Activated B cell treated with CpG ODN at 0.5 μM for 24 hours (primary cell): ENCODE measurements at regions of chr3 and their contacts with region 1.

Region 1: GRCh38 chr3:16842272-16843270 is 42.2 kb upstream of the PLCL2 start:
- DNase-seq: peak; percentile 66
- ATAC-seq: peak; percentile 92
- H3K4me3 Mint-ChIP-seq: peak overlapping the region; percentile 75
- H3K27ac Mint-ChIP-seq: peak overlapping the region; percentile 98
- H3K4me1 Mint-ChIP-seq: peaks cover 67% of the 10 kb centered on the region
- H3K27me3 Mint-ChIP-seq: no peaks in the 10 kb centered on the region
- CTCF ChIP-seq: no peak

Region 2: DNA sequence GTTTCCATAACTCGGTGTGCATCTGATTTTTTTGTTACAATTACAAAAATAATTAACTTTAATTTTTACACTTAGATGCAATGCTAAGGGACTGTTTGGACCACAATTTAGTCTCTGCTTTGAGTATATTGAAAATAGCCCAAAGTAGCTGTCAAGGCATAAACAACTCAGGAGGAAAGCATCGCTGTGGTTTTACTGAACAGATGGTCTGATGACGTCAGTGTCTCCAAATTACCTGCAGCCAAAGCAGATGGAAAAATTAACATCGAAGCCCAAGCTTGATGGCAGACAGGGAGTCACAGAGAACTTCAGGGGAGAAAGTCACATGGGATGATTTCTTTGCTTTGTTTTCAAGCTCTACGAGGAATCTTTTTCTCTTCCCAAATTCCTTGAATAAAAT is 40.9 kb before region 1 on chr3:
- CTCF ChIA-PET with region 1: no interaction called
- POLR2A ChIA-PET with region 1: interaction called, 3 read pairs
- intact Hi-C with region 1: loop called (anchors 1 kb)
- DNase-seq: no peak
- ATAC-seq: no peak
- H3K4me3 Mint-ChIP-seq: peak overlapping the region; percentile 16
- H3K27ac Mint-ChIP-seq: peak overlapping the region; percentile 69
- H3K4me1 Mint-ChIP-seq: peaks cover 44% of the 10 kb centered on the region
- H3K27me3 Mint-ChIP-seq: no peaks in the 10 kb centered on the region
- CTCF ChIP-seq: no peak

Region 3: DNA sequence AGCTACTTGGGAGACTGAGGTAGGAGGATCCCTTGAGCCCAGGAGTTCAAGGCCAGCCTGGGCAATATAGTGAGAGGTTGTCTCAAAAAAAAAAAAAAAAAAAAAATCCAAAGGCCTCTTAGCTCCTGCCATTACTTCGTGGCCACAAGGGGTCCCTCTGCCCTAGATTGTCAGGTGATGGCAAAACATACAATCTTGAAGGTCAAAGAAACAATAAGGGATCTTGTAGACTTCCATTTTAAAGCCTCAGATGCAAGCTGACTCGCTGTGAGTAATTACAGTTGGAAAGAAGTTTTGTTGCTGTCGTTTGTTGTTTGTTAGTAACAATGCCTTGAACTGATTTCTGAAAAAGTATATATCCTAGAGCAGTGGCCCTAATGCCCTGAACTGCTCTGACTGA is 13.8 kb before region 1 on chr3:
- CTCF ChIA-PET with region 1: interaction called, 6 read pairs
- POLR2A ChIA-PET with region 1: interaction called, 4 read pairs
- intact Hi-C with region 1: loop called (anchors 2 kb)
- DNase-seq: no peak
- ATAC-seq: peak; percentile 60
- H3K4me3 Mint-ChIP-seq: no peak overlapping the region
- H3K27ac Mint-ChIP-seq: no peak overlapping the region
- H3K4me1 Mint-ChIP-seq: peaks cover 11% of the 10 kb centered on the region
- H3K27me3 Mint-ChIP-seq: no peaks in the 10 kb centered on the region
- CTCF ChIP-seq: no peak

Region 4: DNA sequence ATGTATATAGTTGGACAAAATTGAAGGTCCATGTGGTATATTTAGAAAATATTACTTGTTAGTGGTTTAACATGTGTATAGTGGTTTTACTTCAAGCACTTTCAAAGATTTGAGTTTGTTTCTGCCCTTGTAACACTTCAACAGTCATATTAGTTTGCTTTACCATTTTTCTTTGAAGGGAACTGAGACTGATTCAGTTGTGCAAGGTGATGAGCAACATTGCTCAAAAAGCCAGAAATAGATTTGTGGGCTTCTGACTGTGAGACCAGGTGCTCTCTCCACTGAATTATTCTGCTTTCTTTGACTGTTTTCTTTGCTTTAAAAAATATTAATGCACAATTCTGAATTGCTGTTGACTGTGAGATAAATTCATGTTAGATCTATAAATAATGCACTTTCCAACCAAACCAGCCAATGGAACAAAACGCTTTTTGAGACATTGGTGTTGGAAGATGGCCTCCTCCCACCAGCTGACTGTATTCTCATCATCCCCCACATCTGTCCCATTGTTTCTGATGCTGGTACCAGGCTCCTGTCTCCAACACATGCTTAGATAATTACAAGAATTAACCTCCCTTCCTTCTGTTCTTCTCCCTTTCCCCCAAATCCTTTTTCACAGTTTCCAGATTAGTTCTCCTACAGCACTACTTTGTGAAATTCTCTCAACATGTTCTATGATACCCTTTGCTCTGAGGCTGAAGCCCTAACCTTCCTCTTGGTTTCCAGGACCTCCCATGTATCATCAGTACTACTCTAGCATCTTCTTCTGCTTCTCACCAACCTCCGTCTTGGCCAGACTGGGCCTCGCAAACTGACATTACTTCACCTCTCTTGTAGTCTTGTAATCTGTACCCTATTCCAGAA is 70.1 kb after region 1 on chr3:
- CTCF ChIA-PET with region 1: no interaction called
- POLR2A ChIA-PET with region 1: interaction called, 8 read pairs
- intact Hi-C with region 1: loop called (anchors 1 kb)
- DNase-seq: no peak
- ATAC-seq: peak; percentile 85
- H3K4me3 Mint-ChIP-seq: peak overlapping the region; percentile 47
- H3K27ac Mint-ChIP-seq: peak overlapping the region; percentile 92
- H3K4me1 Mint-ChIP-seq: peaks cover 84% of the 10 kb centered on the region
- H3K27me3 Mint-ChIP-seq: no peaks in the 10 kb centered on the region
- CTCF ChIP-seq: no peak

Region 5: DNA sequence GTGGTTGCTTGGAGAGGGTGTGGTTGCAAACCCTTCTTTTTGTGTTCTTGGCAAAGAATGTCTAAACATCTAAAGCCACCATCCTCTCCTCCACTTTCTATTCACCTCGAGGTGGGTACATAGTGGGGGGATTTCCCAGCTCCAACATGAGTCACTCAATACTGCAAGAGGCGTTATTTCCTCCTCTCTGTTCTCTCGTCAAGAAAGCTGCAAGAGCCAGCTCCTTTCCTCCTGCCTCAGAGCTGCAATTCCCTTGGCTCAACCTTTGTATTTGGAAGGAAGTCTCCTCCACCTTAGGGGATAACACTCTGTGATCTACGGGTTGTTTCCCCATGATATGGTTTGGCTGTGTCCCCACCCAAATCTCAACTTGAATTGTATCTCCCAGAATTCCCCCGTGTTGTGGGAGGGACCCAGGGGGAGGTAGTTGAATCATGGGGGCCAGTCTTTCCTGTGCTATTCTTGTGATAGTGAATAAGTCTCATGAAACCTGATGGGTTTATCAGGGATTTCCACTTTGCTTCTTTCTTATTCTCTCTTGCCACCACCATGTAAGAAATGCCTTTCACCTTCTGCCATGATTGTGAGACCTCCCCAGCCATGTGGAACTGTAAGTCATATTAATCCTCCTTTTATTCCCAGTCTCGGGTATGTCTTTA is 180.6 kb after region 1 on chr3:
- CTCF ChIA-PET with region 1: no interaction called
- POLR2A ChIA-PET with region 1: no interaction called
- intact Hi-C with region 1: loop called (anchors 1 kb)
- DNase-seq: no peak
- ATAC-seq: peak; percentile 99
- H3K4me3 Mint-ChIP-seq: peak overlapping the region; percentile 49
- H3K27ac Mint-ChIP-seq: peak overlapping the region; percentile 89
- H3K4me1 Mint-ChIP-seq: peaks cover 43% of the 10 kb centered on the region
- H3K27me3 Mint-ChIP-seq: no peaks in the 10 kb centered on the region
- CTCF ChIP-seq: no peak